HEK293T (cell line): ENCODE measurements at regions of chr1 and their contacts with region 1.

Region 1: GRCh38 chr1:44730741-44731512 is at the start of gene RNU5D-1:
- DNase-seq: peak; percentile 77

Region 2: GRCh38 chr1:44616991-44617702 is 113.8 kb before region 1 on chr1:
- CTCF ChIA-PET with region 1: no interaction called
- POLR2A ChIA-PET with region 1: no interaction called
- DNase-seq: no peak

Region 3: GRCh38 chr1:44780583-44781121 is 49.7 kb after region 1 on chr1:
- CTCF ChIA-PET with region 1: interaction called, 3 read pairs
- POLR2A ChIA-PET with region 1: interaction called, 31 read pairs
- DNase-seq: no peak

Region 4: DNA sequence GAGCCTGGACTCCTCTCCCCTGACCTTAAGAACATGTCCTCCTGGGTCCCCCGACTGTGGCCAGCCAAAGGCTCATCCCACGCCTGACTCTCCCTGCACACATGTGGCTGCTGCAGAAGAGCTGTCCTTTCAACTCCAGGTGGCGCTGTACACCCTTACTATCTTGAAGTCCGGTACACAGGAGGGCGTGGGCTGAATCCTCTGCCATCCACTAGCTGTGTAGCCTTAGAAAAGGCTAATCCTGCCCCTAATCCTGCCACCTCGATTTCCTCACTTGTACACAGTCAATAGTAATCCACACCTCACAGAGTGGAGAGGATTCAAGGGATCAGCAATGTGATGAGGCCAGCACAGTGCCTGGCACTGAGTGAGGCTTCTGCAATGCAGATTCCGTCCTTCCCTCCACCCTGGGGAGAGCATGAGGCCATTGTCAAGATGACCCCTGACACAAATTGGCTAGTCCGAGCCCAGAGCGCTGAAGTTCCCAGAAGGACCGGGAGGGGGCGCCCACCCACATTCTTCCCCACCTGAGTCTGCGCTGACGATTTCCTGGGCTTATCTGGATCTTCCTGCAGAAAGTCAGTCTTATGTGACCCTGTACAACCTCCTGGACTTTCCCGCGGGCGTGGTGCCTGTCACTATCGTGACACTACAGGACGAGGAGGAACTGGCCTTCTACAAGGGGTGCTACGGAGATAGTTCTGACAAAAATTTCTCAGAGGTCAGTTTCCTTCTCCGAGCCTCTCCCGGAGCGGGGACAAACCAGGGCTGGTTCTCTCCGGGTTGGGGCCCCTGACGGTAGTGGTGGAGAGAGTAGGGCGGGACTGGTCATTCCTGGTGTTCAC is 1711.6 kb after region 1 on chr1:
- CTCF ChIA-PET with region 1: no interaction called
- POLR2A ChIA-PET with region 1: no interaction called
- DNase-seq: peak; percentile 82